ENCODE measurements at regions of chr16 and their contacts with region 1.

Region 1: DNA sequence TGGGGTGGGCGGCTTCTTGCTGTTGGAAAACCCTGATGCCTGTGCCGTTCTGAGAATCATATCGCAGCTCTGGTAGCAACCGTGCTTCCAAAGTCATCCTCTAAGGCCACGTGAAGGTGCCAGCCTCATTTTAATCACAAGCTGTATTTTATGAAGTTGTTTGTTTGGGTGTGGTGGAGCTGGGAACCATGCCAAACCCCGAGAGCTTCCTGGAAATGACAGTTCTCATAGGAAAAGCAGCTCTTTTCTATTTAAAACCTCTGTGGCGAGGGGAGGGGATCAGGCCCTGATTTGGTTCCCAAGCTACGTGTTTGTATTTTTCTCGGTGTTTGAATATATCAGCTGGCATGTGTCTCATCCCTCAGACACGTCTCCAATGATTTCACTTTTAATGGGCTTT is 21.7 kb downstream of the KNOP1 start:
- DNase-seq: peak; percentile 82 to 88 (median 86)
- ATAC-seq: peak; percentile 46 to 77 (median 61)
- H3K4me3 ChIP-seq: no peak overlapping the region
- H3K27ac ChIP-seq: peak overlapping the region; percentile 44 to 92 (median 82)
- H3K4me1 ChIP-seq: peaks cover 18 to 61% (median 45%) of the 10 kb centered on the region in 12 donors
- H3K27me3 ChIP-seq: no peaks in the 10 kb centered on the region
- CTCF ChIP-seq: no peak
- POLR2A ChIP-seq: no peak

Region 2: DNA sequence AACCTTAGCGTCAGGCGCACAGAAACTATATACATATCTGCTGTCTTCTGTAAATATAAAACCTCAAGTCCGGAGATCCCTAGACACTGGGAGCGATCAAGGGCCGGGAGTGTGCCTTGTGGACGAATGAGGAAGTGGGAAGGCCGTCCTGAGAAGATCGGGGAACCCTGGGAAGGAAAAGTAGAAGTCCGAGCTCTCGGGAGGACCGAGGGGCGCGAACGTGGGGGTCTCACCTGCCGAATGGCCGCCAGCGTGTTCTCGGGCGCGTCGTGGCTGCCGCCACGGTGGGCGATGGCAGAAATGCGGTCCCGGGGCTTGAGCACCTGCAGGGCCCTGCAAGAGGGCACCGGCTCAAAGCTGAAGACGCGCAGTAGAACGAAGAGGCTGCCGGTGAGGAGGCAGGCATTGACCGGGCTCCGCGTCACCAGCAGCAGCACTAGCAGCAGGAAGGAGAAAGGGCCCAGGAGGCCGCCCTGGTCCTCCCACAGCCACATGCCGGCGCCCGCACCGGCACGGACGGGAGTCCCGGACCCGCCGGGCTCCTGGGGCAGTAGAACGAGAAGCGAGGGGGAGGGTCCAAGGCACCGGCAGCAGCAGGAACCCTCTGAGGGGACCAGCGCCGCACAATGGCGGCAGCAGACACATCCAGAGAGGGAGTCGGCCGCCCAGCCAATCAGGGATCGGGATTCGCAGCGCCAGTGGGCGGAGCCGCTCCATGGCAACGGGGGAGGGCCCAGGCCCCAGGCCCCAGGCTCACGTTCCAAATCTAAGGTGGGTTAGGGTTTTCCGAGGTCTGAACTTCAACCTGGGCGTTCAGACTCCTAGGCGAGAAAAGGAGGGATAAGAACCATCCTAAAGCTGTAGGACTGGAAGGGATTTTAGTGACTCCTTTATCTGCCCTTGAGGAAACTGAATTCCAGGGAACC is 174.6 kb before region 1 on chr16 and contains the start of gene GDE1:
- intact Hi-C with region 1: no loop called
- DNase-seq: peak; percentile 96 to 97 (median 96)
- ATAC-seq: peak; percentile 88 to 95 (median 92)
- H3K4me3 ChIP-seq: peak within 1 kb of the TSS; percentile 60 to 95 (median 80)
- H3K27ac ChIP-seq: peak within 1 kb of the TSS; percentile 20 to 95 (median 87)
- H3K4me1 ChIP-seq: peaks cover 4 to 69% (median 37%) of the 10 kb centered on the region in 12 donors
- H3K27me3 ChIP-seq: no peaks in the 10 kb centered on the region
- CTCF ChIP-seq: peak in 7 of 12 donors; percentile 17 to 66 (median 43)
- POLR2A ChIP-seq: peak; percentile 42 to 95
- total RNA-seq, gene GDE1: 77.7 to 134 (median 109) TPM

Region 3: DNA sequence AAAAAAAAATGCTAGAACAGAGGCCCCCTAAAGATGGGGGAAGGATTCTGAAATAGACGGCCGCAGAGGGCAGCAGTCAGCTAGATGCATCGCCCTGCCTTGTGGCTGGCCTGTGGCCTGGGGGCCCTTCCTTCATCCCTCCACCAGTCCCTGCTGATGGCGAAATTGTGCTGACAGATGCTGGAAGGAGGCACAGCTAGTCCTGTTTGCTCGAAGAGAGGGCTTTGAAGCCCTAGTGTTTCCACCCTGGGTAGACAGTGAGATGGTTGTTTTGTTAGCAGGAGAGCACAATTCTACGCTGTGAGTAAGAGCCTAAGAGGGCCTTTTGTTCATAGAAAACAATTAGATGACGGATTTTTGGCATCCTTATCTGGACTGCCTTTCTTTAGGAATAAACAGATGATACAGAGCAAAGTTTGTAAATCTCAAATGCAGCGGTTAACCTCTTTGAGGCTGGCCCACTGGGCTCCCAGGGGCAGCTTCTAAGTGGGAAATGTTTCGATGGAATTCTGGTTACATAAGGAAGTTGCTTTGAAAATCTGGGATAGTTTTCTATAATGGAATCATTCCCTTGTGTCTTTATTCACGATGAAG is 117.9 kb before region 1 on chr16:
- intact Hi-C with region 1: no loop called
- DNase-seq: no peak
- ATAC-seq: no peak
- H3K4me3 ChIP-seq: no peak overlapping the region
- H3K27ac ChIP-seq: peak overlapping the region in 8 of 12 donors; percentile 13 to 57 (median 45)
- H3K4me1 ChIP-seq: peaks cover 0 to 20% (median 0%) of the 10 kb centered on the region in 12 donors
- H3K27me3 ChIP-seq: no peaks in the 10 kb centered on the region
- CTCF ChIP-seq: no peak
- POLR2A ChIP-seq: no peak

Region 4: DNA sequence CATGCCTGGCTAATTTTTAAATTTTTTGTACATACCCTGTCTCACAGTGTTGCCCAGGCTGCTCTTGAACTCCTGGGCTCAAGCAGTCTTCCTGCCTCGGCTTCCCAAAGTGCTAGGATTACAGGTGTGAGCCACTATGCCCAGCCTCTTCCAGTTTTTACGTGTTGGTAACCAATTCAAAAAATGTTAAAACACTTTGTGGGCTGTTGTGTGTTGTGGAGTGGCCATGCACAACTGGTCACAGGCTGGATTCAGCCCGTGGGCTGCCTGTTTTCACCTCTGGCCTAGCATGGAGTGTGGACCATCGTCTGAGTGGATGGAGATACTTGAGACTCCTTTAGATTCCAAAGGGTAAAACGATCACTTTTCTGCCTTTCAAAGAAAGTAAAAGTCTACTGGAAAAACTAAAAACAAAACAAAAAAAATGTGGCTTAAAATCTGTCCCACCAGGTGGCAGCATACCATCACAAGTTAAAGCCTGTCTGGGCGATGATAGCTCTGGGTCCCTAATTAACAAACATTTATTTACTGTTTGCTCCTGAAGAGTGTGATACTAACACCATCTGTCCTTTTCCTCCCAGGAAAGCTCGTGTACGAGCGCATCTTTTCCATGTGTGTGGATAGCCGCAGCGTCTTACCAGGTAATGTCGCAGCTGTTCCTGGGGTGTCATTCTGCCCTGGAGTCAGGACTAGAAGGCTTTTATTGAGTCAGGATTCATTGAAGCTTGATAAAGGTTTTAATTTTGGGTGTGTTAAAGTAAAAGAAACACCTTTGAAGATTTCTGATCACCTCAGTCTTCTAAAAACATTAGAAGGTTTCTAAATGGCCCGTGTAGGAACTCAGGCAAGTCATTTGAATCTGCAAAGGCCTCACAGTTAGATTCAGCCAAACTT is 95.0 kb before region 1 on chr16:
- intact Hi-C with region 1: loop called in 1 of 10 experiments (anchors 10 kb)
- DNase-seq: no peak
- ATAC-seq: no peak
- H3K4me3 ChIP-seq: no peak overlapping the region
- H3K27ac ChIP-seq: no peak overlapping the region
- H3K4me1 ChIP-seq: peaks cover 0 to 14% (median 5%) of the 10 kb centered on the region in 12 donors
- H3K27me3 ChIP-seq: no peaks in the 10 kb centered on the region
- CTCF ChIP-seq: peak; percentile 53 to 81 (median 69)
- POLR2A ChIP-seq: no peak

Region 5: GRCh38 chr16:19737306-19738038 is 41.1 kb after region 1 on chr16:
- intact Hi-C with region 1: no loop called
- DNase-seq: peak in 2 of 5 donors; percentile 24 to 61
- ATAC-seq: peak in 2 of 4 donors; percentile 39
- H3K4me3 ChIP-seq: no peak overlapping the region
- H3K27ac ChIP-seq: peak overlapping the region in 1 of 12 donors; percentile 27
- H3K4me1 ChIP-seq: peaks cover 0 to 37% (median 16%) of the 10 kb centered on the region in 12 donors
- H3K27me3 ChIP-seq: no peaks in the 10 kb centered on the region
- CTCF ChIP-seq: no peak
- POLR2A ChIP-seq: no peak